Mammary epithelial cell (primary cell): ENCODE measurements at regions of chr1 and their contacts with region 1.

Region 1: GRCh38 chr1:86035101-86035500 is 121.5 kb downstream of the COL24A1 start:
- DNase-seq: no peak
- H3K4me3 ChIP-seq: no peak overlapping the region
- H3K27ac ChIP-seq: no peak overlapping the region
- H3K4me1 ChIP-seq: no peaks in the 10 kb centered on the region
- H3K27me3 ChIP-seq: peaks cover 2% of the 10 kb centered on the region
- CTCF ChIP-seq: no peak

Region 2: GRCh38 chr1:86061551-86061990 is 26.5 kb after region 1 on chr1:
- CTCF ChIA-PET with region 1: no interaction called
- dilution Hi-C with region 1: no loop called
- in situ Hi-C with region 1: no loop called
- intact Hi-C with region 1: loop called (anchors 1 kb)
- DNase-seq: no peak
- H3K4me3 ChIP-seq: no peak overlapping the region
- H3K27ac ChIP-seq: no peak overlapping the region
- H3K4me1 ChIP-seq: no peaks in the 10 kb centered on the region
- H3K27me3 ChIP-seq: peaks cover 6% of the 10 kb centered on the region
- CTCF ChIP-seq: no peak